MCF 10A (cell line): ENCODE measurements at regions of chr7 and their contacts with region 1.

Region 1: GRCh38 chr7:41189866-41190265 is 513.0 kb downstream of the INHBA start:
- DNase-seq: peak; percentile 96
- H3K4me3 Mint-ChIP-seq: no peak overlapping the region
- H3K27ac Mint-ChIP-seq: peak overlapping the region; percentile 37
- H3K4me1 Mint-ChIP-seq: peaks cover 32% of the 10 kb centered on the region
- H3K27me3 Mint-ChIP-seq: no peaks in the 10 kb centered on the region
- CTCF ChIP-seq: no peak

Region 2: DNA sequence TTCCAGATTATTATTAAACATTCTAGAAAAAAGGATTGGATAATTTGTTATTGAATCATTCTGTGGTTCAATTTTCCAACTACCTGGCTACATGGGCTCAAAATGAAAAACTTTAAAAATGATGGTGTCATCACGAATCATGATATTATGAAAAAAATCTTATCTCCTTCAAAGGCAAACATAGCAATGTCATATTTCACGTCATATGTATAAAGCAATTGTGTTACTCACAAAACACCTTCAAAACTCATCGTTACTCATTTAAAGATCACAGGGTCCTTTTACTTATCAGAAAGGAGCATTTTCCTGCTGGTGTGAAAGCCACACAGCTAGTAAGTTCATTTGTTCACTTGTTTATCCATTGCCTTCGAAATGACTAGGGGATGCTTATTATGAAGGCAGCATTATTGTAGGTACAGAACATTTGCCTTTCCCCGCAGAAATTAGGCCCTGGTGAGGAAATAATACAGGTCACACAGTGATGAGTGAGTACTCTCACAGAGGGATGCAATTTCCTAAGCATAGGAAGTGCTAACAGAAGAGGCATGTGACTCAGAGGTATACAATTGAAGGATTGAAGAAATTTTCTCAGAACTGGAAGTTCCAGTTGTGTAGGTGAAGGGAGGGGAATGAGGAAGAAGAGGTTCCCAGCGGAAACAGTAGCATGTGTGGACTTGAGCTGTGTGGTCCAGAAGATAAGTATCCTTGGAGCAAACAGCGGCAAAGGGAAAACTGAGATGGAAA is 34.4 kb after region 1 on chr7:
- CTCF ChIA-PET with region 1: no interaction called
- POLR2A ChIA-PET with region 1: interaction called, 9 read pairs
- intact Hi-C with region 1: loop called (anchors 2 kb)
- DNase-seq: peak; percentile 80
- H3K4me3 Mint-ChIP-seq: no peak overlapping the region
- H3K27ac Mint-ChIP-seq: no peak overlapping the region
- H3K4me1 Mint-ChIP-seq: peaks cover 15% of the 10 kb centered on the region
- H3K27me3 Mint-ChIP-seq: no peaks in the 10 kb centered on the region
- CTCF ChIP-seq: no peak

Region 3: DNA sequence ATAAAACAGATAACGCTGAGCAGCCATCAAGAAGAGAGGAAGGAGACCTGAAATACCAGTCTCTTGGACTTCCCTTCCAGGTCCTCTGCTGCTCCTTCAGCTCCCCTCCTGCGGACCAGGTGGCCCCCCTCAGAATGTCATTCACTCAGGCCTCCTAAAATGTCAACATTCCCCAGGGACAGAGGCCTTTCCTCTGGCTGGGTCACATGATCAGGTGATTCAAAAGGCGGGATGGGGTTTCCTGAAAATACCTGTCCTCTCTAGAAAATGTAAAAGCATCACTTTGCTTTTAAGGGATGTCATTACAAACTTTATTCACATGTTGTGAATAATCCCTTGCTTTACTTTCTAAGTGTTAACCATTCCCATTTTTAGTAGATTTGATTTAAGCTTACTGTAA is 202.0 kb after region 1 on chr7:
- CTCF ChIA-PET with region 1: no interaction called
- POLR2A ChIA-PET with region 1: no interaction called
- intact Hi-C with region 1: no loop called
- DNase-seq: no peak
- H3K4me3 Mint-ChIP-seq: no peak overlapping the region
- H3K27ac Mint-ChIP-seq: no peak overlapping the region
- H3K4me1 Mint-ChIP-seq: no peaks in the 10 kb centered on the region
- H3K27me3 Mint-ChIP-seq: no peaks in the 10 kb centered on the region
- CTCF ChIP-seq: no peak